Psoas muscle (tissue), 8 donors: ENCODE measurements at regions of chr15 and their contacts with region 1.

Region 1: GRCh38 chr15:90954712-90955671 is at the start of gene RCCD1:
- DNase-seq: peak; percentile 97 to 98
- ATAC-seq: peak; percentile 92 to 94 (median 93)
- H3K4me3 ChIP-seq: peak within 1 kb of the TSS; percentile 89
- H3K27ac ChIP-seq: peak within 1 kb of the TSS; percentile 100
- H3K4me1 ChIP-seq: peaks cover 18% of the 10 kb centered on the region
- H3K27me3 ChIP-seq: no peaks in the 10 kb centered on the region
- CTCF ChIP-seq: no peak
- total RNA-seq, gene RCCD1: 4.4 to 7.6 (median 5.3) TPM

Region 2: DNA sequence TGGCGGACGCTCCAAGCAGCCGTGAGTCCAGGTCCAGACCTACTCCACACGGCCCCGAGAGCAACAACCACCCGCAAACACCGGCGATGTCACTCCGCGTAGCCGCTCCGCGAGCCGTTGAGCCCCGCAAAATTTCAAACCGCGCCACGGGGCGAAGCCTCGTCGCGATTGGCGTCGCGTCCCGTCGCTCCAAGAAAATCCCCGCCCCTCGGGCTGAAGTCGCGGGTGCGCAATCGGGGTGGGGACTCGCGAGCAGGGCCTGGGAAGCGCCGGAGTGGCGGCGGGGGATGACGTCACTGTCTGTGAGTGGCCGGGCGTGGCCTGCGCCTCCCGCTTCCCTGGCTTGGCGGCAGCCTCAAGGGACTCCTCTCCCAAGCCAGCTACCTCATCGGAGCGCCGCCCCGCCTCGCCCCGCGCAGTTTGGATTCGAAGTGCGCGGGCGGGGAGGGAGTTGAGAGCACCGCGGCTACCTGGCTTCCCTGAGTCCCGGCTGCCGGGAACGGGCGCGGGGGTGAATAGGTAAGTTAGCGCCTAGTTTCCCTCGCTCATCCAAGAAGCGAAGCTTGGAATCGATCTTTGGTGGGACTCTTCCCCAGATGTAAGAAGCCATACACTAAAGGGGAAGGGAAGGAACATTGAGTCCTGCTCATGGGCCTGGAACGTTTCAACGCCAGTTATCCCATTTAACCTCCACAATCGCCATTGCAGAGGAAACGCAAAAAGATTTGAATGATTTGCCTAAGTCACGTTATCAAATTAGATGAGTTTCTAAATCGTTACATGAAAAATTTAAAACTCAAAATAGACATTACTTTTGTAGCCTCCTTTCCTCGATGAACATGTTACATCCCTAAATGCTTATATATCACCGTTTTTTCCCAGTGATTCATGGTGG is 39.7 kb after region 1 on chr15 and contains the start of gene PRC1:
- intact Hi-C with region 1: loop called (anchors 5 kb)
- DNase-seq: peak; percentile 98 to 99
- ATAC-seq: peak; percentile 100
- H3K4me3 ChIP-seq: peak within 1 kb of the TSS; percentile 90
- H3K27ac ChIP-seq: peak within 1 kb of the TSS; percentile 60
- H3K4me1 ChIP-seq: peaks cover 3% of the 10 kb centered on the region
- H3K27me3 ChIP-seq: no peaks in the 10 kb centered on the region
- CTCF ChIP-seq: no peak
- total RNA-seq, gene PRC1: 1.6 to 2.2 (median 1.9) TPM

Region 3: DNA sequence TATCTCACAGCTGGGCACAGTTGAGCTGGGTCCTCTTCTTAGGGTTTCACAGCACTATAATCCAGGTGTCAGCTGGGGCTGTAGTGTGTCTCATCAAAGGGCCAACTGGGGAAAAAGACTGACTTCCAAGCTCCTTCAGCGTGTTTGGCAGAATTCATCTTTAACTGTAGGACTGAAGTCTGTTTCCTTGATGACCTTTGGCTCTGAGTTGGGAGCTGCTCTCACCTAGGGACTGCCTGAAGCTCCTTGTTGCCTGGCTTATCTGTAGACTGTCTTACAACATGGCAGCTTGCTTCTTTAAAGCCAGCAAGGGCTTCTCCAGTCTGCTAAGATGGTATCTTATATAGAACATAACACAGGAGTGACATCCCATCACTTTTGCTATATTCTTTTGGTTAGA is 72.7 kb after region 1 on chr15:
- intact Hi-C with region 1: loop called (anchors 5 kb)
- DNase-seq: no peak
- ATAC-seq: no peak
- H3K4me3 ChIP-seq: no peak overlapping the region
- H3K27ac ChIP-seq: no peak overlapping the region
- H3K4me1 ChIP-seq: no peaks in the 10 kb centered on the region
- H3K27me3 ChIP-seq: no peaks in the 10 kb centered on the region
- CTCF ChIP-seq: no peak

Region 4: DNA sequence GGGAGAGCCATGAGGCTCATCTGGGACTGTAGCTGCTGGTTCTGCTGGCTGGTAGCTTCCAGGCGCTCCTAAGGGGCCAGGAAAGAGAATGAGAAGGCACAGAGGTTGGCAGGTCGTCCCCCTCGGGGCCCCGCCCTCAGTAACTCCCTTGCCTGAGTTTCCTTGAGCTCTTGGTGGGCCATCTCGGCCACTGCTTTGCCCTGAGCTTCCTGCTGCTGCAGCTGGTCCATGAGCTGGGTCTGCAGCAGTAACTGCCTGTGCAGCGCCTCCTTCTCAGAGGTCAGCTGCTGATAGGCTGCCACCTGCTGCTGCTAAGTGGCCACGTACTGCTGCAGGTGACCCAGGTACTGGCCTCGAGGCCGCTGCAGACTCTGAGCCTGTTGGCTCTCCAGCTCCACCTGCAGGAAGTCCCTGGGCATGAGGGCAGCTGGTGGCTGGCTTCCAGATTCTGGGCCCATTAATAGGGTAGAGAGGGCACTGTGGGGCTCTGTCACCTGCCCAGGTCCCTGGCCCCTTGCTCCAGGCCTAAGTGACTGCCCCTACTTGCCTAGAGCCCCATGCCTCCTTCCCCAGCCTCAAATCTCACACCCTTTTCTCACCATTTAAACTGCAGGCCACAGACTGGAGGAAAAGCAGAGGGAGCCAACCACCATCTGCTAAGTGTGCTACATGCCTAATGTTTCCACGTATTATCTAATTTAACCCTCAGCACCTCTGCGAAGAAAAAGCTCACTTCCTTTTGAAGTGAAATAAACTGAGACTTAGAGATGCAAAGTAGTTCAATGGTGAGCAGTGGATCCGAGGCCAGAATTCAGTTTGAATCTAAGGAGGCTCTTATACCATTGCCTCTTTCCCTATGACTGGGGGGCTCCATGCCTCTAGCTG is 78.2 kb after region 1 on chr15:
- intact Hi-C with region 1: loop called (anchors 5 kb)
- DNase-seq: peak; percentile 41 to 66
- ATAC-seq: peak in 3 of 4 donors; percentile 59 to 70 (median 67)
- H3K4me3 ChIP-seq: no peak overlapping the region
- H3K27ac ChIP-seq: no peak overlapping the region
- H3K4me1 ChIP-seq: no peaks in the 10 kb centered on the region
- H3K27me3 ChIP-seq: no peaks in the 10 kb centered on the region
- CTCF ChIP-seq: peak; percentile 58

Region 5: GRCh38 chr15:91049378-91050127 is 94.6 kb after region 1 on chr15:
- intact Hi-C with region 1: loop called in 1 of 2 experiments (anchors 2 kb)
- DNase-seq: no peak
- ATAC-seq: peak; percentile 83 to 94 (median 91)
- H3K4me3 ChIP-seq: no peak overlapping the region
- H3K27ac ChIP-seq: no peak overlapping the region
- H3K4me1 ChIP-seq: no peaks in the 10 kb centered on the region
- H3K27me3 ChIP-seq: peaks cover 0 to 10% (median 3%) of the 10 kb centered on the region in 3 donors
- CTCF ChIP-seq: peak; percentile 62

Region 6: DNA sequence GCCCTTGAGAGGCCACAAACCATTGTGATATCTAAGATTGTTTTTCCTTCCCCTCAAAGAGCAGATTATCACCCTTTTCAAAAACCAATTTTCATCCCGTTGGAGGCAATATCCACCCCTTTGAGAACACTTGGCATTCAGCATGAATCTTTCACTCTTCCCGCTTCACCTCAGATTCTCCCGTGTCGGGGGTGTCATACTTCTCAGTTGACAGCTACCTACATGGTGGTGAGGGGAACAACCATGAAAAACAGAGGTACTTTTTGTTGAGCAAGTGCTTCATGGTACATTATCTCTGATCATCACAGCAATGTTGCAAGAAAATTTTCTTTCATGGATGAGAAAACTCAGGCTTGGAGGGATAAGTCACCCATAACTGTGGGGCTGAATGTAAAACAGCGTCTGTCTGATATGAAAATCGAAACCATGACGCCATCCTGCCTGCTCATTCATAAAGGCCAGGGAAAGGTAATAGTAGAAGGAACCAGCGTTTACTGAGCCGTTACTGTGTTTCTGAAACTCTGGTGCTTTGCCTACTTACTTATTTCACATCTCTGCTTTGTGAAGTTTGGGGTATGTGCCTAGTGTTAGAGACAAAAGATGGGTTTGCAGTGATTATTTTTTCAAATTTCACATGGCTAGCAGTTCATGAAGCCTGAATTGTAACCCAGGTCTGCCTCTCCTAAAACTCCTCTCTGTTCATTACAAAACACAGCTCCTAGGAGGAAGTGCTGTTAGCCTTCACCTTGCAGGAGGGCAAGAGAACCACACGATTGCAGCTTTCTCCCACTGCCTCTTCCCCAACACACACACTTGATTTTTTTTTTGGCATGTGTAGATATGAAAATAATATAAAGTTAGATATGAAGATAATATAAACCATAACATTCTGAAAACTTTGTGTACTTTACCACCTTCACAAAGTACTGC is 180.5 kb after region 1 on chr15:
- intact Hi-C with region 1: no loop called
- DNase-seq: no peak
- ATAC-seq: no peak
- H3K4me3 ChIP-seq: no peak overlapping the region
- H3K27ac ChIP-seq: no peak overlapping the region
- H3K4me1 ChIP-seq: no peaks in the 10 kb centered on the region
- H3K27me3 ChIP-seq: peaks cover 0 to 5% (median 0%) of the 10 kb centered on the region in 3 donors
- CTCF ChIP-seq: no peak

Region 7: GRCh38 chr15:91271565-91272153 is 316.7 kb after region 1 on chr15:
- intact Hi-C with region 1: loop called (anchors 2 to 5 kb)
- DNase-seq: no peak
- ATAC-seq: peak; percentile 74 to 90 (median 78)
- H3K4me3 ChIP-seq: no peak overlapping the region
- H3K27ac ChIP-seq: no peak overlapping the region
- H3K4me1 ChIP-seq: no peaks in the 10 kb centered on the region
- H3K27me3 ChIP-seq: peaks cover 0 to 7% (median 0%) of the 10 kb centered on the region in 3 donors
- CTCF ChIP-seq: peak; percentile 85